ENCODE measurements at regions of chr10 and their contacts with region 1.

Region 1: DNA sequence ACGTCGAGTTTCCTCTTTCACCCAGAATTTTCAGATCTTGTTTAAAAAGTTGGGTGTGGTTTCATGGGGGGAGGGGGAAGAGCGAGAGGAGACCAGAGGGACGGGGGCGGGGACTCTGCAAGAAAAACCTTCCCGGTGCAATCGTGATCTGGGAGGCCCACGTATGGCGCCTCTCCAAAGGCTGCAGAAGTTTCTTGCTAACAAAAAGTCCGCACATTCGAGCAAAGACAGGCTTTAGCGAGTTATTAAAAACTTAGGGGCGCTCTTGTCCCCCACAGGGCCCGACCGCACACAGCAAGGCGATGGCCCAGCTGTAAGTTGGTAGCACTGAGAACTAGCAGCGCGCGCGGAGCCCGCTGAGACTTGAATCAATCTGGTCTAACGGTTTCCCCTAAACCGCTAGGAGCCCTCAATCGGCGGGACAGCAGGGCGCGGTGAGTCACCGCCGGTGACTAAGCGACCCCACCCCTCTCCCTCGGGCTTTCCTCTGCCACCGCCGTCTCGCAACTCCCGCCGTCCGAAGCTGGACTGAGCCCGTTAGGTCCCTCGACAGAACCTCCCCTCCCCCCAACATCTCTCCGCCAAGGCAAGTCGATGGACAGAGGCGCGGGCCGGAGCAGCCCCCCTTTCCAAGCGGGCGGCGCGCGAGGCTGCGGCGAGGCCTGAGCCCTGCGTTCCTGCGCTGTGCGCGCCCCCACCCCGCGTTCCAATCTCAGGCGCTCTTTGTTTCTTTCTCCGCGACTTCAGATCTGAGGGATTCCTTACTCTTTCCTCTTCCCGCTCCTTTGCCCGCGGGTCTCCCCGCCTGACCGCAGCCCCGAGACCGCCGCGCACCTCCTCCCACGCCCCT is at the start of gene VIM:
- DNase-seq: peak; percentile 91
- ATAC-seq: peak; percentile 42
- H3K4me3 ChIP-seq: peak within 1 kb of the TSS; percentile 74 to 89 (median 82)
- H3K4me3 Mint-ChIP-seq: peak within 1 kb of the TSS; percentile 99
- H3K27ac ChIP-seq: peak within 1 kb of the TSS; percentile 91 to 97
- H3K27ac Mint-ChIP-seq: peak within 1 kb of the TSS; percentile 100
- H3K4me1 ChIP-seq: peaks cover 31% of the 10 kb centered on the region in 2 donors
- H3K4me1 Mint-ChIP-seq: peaks cover 38% of the 10 kb centered on the region
- H3K27me3 ChIP-seq: no peaks in the 10 kb centered on the region
- H3K27me3 Mint-ChIP-seq: no peaks in the 10 kb centered on the region
- CTCF ChIP-seq: peak; percentile 5
- total RNA-seq, gene VIM: 333 and 343 TPM in 2 replicates

Region 2: GRCh38 chr10:15859906-15860691 is 1368.2 kb before region 1 on chr10 and contains the start of gene MINDY3:
- CTCF ChIA-PET with region 1: no interaction called
- POLR2A ChIA-PET with region 1: no interaction called
- intact Hi-C with region 1: loop called (anchors 1 kb)
- DNase-seq: peak; percentile 89
- ATAC-seq: peak; percentile 93
- H3K4me3 ChIP-seq: peak within 1 kb of the TSS; percentile 86 to 94 (median 92)
- H3K4me3 Mint-ChIP-seq: peak within 1 kb of the TSS; percentile 100
- H3K27ac ChIP-seq: peak within 1 kb of the TSS; percentile 76 to 85
- H3K27ac Mint-ChIP-seq: peak within 1 kb of the TSS; percentile 97
- H3K4me1 ChIP-seq: peaks cover 18 to 21% of the 10 kb centered on the region in 2 donors
- H3K4me1 Mint-ChIP-seq: peaks cover 38% of the 10 kb centered on the region
- H3K27me3 ChIP-seq: peaks cover 0 to 5% (median 2%) of the 10 kb centered on the region in 4 experiments
- H3K27me3 Mint-ChIP-seq: peaks cover 18% of the 10 kb centered on the region
- CTCF ChIP-seq: no peak
- total RNA-seq, gene MINDY3: 29.3 and 31.9 TPM in 2 replicates

Region 3: DNA sequence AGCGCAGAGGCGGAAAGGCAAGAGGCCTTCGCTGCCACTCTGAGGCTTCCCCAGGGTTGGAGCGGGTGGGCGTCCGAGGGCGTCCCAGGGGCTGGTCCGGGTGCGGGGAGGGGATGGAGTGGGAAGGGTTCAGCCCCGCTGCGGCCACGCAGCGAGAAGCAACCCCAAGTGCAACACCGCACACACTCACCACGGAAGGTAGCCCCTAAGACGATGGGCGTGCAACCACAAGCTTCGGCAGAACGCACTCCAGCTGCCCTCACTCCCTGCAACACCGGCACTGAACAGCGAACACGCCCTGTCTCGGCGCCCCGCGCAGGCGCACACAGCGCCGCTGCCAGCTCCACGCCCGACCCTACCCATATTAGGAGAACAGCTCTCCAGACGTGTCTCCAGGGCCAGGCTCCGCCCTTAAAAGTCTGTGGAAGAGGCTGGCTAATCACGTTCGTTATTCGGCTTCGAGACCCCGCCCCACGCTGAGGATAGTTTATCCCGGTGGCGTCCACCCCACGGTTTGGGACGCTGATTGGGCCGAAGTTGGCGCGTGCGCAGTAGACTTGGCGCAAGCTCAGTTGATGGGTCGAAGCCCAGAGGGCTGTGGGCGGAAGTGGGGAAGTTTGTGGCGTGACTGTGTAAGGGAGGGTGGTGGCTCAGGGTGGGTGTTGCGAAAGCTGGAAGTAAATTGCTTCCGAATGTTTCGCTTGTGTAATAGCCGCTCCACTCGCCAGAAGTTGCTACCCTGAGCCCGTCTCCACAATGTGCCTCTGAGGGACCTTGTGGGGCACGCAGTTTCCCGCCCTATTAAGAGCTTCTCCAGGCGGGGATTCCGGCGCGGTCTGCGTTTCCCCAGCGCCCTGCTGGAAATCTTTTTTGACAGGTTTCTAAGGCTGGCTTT is 410.9 kb before region 1 on chr10 and contains the start of gene RSU1:
- CTCF ChIA-PET with region 1: interaction called, 13 read pairs
- POLR2A ChIA-PET with region 1: interaction called, 29 read pairs
- intact Hi-C with region 1: loop called (anchors 1 kb)
- DNase-seq: peak; percentile 100
- ATAC-seq: peak; percentile 98
- H3K4me3 ChIP-seq: peak within 1 kb of the TSS; percentile 68 to 92 (median 92)
- H3K4me3 Mint-ChIP-seq: peak within 1 kb of the TSS; percentile 92
- H3K27ac ChIP-seq: peak within 1 kb of the TSS; percentile 78
- H3K27ac Mint-ChIP-seq: peak within 1 kb of the TSS; percentile 98
- H3K4me1 ChIP-seq: peaks cover 13 to 15% of the 10 kb centered on the region in 2 donors
- H3K4me1 Mint-ChIP-seq: peaks cover 30% of the 10 kb centered on the region
- H3K27me3 ChIP-seq: peaks cover 0 to 2% (median 0%) of the 10 kb centered on the region in 4 experiments
- H3K27me3 Mint-ChIP-seq: peaks cover 5% of the 10 kb centered on the region
- CTCF ChIP-seq: no peak
- total RNA-seq, gene RSU1: 37.2 and 41.1 TPM in 2 replicates

Region 4: DNA sequence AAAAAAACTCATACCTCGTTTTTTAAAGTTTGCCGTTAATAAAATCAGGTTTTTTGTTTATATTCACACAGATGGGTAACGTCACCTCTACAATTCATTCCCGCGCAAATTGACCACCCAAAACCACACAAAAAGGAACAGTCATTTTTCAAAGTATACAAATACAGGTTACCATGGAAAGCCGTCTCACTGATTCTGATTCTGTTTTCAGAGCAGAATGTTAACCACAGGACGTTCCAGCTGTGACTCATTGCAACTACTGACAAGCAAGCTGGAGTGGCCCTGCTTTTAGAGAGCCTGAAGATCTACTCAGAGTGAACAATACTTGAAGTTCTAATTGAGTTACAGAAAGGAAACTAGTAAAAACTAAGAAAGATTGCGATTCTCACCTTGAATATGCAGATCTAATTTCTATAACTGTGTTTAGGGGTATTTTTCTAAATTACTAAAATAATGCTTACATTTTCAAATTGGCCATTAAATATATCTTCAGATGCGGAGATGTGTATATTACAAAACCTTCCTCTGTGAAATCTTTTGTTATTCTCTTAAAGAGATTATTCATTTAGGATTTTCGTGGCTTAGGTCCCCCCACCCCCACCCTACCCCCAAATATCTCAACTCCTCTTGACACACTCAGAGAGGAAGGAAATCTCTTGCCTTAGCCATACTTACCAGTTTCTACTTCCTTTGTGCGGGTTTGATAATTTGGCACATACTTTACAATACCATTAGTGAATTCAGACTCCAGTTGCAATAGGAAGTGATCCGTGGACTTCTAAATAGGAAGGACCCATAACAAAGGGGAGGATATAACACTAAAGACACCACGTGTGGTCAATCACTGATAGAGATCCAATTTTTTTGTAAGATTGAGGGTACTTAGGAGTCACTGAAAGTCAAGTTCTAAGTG is 204.7 kb before region 1 on chr10:
- CTCF ChIA-PET with region 1: no interaction called
- POLR2A ChIA-PET with region 1: no interaction called
- intact Hi-C with region 1: loop called (anchors 10 kb)
- DNase-seq: peak; percentile 34
- ATAC-seq: peak; percentile 65
- H3K4me3 ChIP-seq: peak overlapping the region in 1 of 5 experiments; percentile 15
- H3K4me3 Mint-ChIP-seq: peak overlapping the region; percentile 0
- H3K27ac ChIP-seq: peak overlapping the region in 1 of 2 donors; percentile 28
- H3K27ac Mint-ChIP-seq: no peak overlapping the region
- H3K4me1 ChIP-seq: peaks cover 8 to 16% of the 10 kb centered on the region in 2 donors
- H3K4me1 Mint-ChIP-seq: peaks cover 24% of the 10 kb centered on the region
- H3K27me3 ChIP-seq: no peaks in the 10 kb centered on the region
- H3K27me3 Mint-ChIP-seq: peaks cover 3% of the 10 kb centered on the region
- CTCF ChIP-seq: no peak

Region 5: DNA sequence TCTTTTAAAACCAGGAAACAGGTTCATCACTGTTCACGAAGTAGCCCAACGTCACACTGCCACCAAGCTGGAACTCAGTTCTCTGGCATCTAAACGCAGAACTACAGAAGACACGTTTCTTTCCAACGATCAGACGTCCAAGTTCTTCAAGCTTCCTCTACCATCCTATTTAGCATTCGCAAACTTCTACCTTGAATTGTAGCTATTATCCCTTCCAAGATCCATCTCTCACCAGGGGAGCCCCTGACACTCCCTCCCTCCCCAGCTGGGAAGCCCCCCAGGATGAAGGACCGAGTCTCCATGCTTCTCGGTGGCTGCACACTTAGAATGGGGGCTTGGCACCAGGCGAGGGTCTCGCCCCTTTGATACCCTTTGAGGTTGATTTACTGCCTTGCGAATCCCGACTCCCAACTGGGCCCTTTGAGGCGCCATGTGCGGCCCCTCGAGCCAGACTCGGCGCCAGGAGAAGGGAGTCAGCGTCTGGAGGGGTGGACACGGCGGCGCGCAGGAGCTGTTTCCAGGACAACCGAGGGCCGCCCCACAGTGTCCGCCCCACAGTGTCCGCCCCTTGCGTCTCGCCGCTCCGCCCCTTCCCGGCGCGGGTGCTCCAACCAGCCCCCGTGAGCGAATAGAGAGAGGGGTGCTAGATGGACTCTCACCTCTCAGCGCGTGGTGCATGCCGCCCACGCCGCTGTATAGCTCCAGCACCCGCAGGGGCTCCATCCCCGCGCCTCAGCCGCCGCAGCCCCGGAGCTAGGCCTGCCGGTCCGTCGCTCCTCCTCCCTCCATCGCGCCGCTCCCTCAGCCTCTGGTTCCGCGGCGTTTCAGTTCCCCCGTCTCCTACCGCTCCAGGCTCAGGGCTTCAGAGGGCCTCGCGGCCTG is 27.2 kb before region 1 on chr10 and contains the start of gene TRDMT1:
- CTCF ChIA-PET with region 1: interaction called, 94 read pairs
- POLR2A ChIA-PET with region 1: interaction called, 91 read pairs
- intact Hi-C with region 1: loop called (anchors 1 kb)
- DNase-seq: peak; percentile 89
- ATAC-seq: peak; percentile 91
- H3K4me3 ChIP-seq: peak within 1 kb of the TSS; percentile 43 to 95 (median 70)
- H3K4me3 Mint-ChIP-seq: peak within 1 kb of the TSS; percentile 97
- H3K27ac ChIP-seq: peak within 1 kb of the TSS; percentile 56 to 89
- H3K27ac Mint-ChIP-seq: peak within 1 kb of the TSS; percentile 97
- H3K4me1 ChIP-seq: peaks cover 13 to 17% of the 10 kb centered on the region in 2 donors
- H3K4me1 Mint-ChIP-seq: peaks cover 27% of the 10 kb centered on the region
- H3K27me3 ChIP-seq: no peaks in the 10 kb centered on the region
- H3K27me3 Mint-ChIP-seq: no peaks in the 10 kb centered on the region
- CTCF ChIP-seq: no peak
- total RNA-seq, gene TRDMT1: 20.4 and 24.5 TPM in 2 replicates

Region 6: DNA sequence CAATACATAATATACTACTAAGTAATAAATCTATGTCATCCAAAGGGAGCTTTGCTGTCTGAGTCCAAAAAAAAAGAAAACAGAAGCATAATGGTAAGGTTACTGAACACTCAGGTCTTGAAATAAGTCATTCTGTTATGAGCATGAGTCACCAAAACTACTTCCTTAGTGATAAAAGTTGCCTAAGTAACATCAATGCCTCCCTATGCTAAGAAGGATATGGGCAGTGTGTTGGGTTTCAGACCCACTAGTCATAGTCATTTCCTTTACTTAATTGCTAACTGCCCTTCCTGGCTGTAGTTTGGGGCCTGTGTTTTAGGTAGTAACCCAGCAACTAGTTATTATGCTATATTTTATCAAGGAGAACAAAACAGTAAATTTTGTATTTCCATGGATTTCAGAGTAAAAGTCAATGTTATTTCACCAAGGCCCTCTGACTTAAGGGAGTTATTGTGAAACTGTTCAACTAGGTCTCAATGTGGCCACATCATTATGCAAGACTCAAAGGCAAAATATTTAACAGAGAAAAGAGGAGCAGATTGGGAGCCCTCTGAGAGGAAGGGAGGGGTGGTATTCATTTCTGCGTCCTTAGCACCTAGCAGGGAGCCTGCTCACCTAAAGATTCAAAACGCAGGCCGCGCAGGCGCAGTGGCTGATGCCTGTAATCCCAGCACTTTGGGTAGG is 12.0 kb before region 1 on chr10:
- CTCF ChIA-PET with region 1: interaction called, 8 read pairs
- POLR2A ChIA-PET with region 1: no interaction called
- intact Hi-C with region 1: loop called (anchors 1 kb)
- DNase-seq: no peak
- ATAC-seq: peak; percentile 76
- H3K4me3 ChIP-seq: no peak overlapping the region
- H3K4me3 Mint-ChIP-seq: no peak overlapping the region
- H3K27ac ChIP-seq: no peak overlapping the region
- H3K27ac Mint-ChIP-seq: peak overlapping the region; percentile 61
- H3K4me1 ChIP-seq: peaks cover 0 to 6% of the 10 kb centered on the region in 2 donors
- H3K4me1 Mint-ChIP-seq: peaks cover 7% of the 10 kb centered on the region
- H3K27me3 ChIP-seq: no peaks in the 10 kb centered on the region
- H3K27me3 Mint-ChIP-seq: no peaks in the 10 kb centered on the region
- CTCF ChIP-seq: no peak

Region 7: DNA sequence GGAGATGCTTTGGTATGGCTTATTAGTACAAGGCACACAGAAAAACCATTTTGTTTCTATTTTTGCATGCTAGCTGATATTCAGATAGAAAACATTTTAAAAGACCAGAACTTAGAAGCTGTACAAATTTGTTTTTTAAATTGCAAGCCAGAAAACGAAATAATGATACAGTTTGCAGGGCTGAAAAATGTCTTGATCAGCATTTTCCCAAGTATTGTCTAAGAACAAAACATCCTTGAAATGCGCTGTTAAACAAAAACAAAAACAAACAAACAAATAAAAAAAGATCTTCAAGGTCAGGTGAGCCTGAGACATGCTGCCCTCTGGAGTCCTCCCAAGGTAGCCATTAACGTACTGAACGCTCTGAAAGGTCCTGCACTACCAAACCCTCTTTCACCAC is 98.1 kb after region 1 on chr10:
- CTCF ChIA-PET with region 1: no interaction called
- POLR2A ChIA-PET with region 1: no interaction called
- intact Hi-C with region 1: no loop called
- DNase-seq: no peak
- ATAC-seq: no peak
- H3K4me3 ChIP-seq: no peak overlapping the region
- H3K4me3 Mint-ChIP-seq: no peak overlapping the region
- H3K27ac ChIP-seq: no peak overlapping the region
- H3K27ac Mint-ChIP-seq: no peak overlapping the region
- H3K4me1 ChIP-seq: no peaks in the 10 kb centered on the region
- H3K4me1 Mint-ChIP-seq: no peaks in the 10 kb centered on the region
- H3K27me3 ChIP-seq: no peaks in the 10 kb centered on the region
- H3K27me3 Mint-ChIP-seq: no peaks in the 10 kb centered on the region
- CTCF ChIP-seq: no peak

Region 8: GRCh38 chr10:17643755-17644484 is 415.6 kb after region 1 on chr10 and contains the start of gene STAM:
- CTCF ChIA-PET with region 1: interaction called, 10 read pairs
- POLR2A ChIA-PET with region 1: no interaction called
- intact Hi-C with region 1: loop called (anchors 5 kb)
- DNase-seq: peak; percentile 96
- ATAC-seq: peak; percentile 90
- H3K4me3 ChIP-seq: peak within 1 kb of the TSS; percentile 71 to 99 (median 86)
- H3K4me3 Mint-ChIP-seq: peak within 1 kb of the TSS; percentile 98
- H3K27ac ChIP-seq: peak within 1 kb of the TSS; percentile 96 to 99
- H3K27ac Mint-ChIP-seq: peak within 1 kb of the TSS; percentile 100
- H3K4me1 ChIP-seq: peaks cover 35 to 43% of the 10 kb centered on the region in 2 donors
- H3K4me1 Mint-ChIP-seq: peaks cover 51% of the 10 kb centered on the region
- H3K27me3 ChIP-seq: no peaks in the 10 kb centered on the region
- H3K27me3 Mint-ChIP-seq: no peaks in the 10 kb centered on the region
- CTCF ChIP-seq: no peak
- total RNA-seq, gene STAM: 31.6 and 35.1 TPM in 2 replicates